Mammary epithelial cell (primary cell): ENCODE measurements at regions of chr5 and their contacts with region 1.

Region 1: DNA sequence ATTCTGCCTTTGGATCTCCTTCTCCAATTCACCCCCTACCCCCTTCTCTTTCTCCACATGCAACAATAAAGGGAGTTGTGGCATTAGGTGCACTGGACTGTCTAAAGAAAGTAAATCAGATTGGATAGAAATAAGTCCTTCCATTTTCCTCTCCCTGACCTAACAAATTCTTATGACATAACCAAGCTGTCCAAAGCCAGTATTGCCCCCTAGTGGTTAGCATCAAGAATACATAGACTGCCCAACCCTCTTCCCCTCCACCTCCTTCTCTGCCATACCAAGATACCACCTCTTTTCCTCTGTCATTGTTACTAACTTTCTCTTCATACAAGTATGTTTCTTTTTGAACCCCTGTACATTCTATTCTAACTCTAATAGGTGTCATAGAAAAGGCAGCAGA is 45.7 kb downstream of the PPARGC1B start:
- DNase-seq: peak; percentile 20
- H3K4me3 ChIP-seq: no peak overlapping the region
- H3K27ac ChIP-seq: no peak overlapping the region
- H3K4me1 ChIP-seq: peaks cover 40% of the 10 kb centered on the region
- H3K27me3 ChIP-seq: no peaks in the 10 kb centered on the region
- CTCF ChIP-seq: peak; percentile 48 to 51

Region 2: DNA sequence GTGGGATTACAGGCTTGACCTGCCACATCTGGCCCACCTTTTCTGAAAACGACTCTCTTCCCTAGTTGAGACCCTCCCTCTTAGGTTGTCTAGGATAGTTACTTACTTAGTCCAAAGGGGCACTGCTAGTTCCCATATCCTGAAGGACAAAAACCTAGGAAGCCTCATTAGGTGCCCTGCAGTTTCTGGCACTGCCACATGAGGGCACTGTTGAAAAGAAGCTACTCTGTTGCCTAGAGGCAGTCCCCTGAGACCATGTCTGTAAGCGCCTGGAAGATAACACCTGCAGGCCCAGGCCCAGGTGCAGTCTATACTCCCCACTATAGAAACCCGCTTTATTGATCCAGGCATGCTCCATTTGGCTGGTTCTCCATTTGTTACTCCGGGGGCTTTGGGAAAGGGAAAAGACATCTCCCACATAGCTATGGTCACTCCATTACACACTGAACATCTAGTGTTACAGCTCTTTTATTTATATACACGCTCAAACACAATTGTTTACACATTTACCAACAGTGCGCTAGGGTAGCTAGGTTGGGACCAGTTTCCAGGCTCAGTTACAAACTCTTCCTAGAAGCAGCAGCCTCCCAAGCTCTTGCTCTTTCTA is 119.1 kb before region 1 on chr5:
- CTCF ChIA-PET with region 1: interaction called, 3 read pairs
- dilution Hi-C with region 1: no loop called
- in situ Hi-C with region 1: no loop called
- intact Hi-C with region 1: loop called (anchors 2 kb)
- DNase-seq: peak; percentile 26
- H3K4me3 ChIP-seq: no peak overlapping the region
- H3K27ac ChIP-seq: no peak overlapping the region
- H3K4me1 ChIP-seq: no peaks in the 10 kb centered on the region
- H3K27me3 ChIP-seq: no peaks in the 10 kb centered on the region
- CTCF ChIP-seq: peak; percentile 93 to 96

Region 3: DNA sequence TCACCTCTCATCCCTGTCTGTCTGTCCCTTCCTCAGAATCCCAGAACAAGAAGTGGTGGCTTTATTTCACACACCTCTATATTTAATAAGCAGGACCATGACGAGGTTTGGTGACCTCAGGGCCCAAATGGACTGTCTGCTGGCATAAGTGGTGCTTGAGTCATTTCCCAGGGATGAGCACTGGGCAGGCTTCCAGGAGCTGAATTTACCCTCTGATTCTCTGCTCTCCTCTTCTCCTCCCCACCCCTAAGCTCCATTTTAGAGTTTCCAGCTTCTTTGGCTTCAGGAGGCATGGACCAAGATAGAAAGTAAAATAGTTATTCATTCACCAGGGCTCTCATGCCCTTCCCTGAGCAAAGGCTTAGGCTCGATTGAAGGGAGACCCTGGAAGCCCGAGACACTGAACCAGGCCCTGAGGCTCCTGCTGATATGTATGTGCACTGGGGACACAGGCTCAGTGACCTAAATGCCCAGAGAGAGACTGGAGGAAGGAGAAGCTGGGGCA is 23.4 kb after region 1 on chr5:
- CTCF ChIA-PET with region 1: no interaction called
- dilution Hi-C with region 1: no loop called
- in situ Hi-C with region 1: no loop called
- intact Hi-C with region 1: loop called (anchors 2 kb)
- DNase-seq: peak; percentile 73
- H3K4me3 ChIP-seq: no peak overlapping the region
- H3K27ac ChIP-seq: no peak overlapping the region
- H3K4me1 ChIP-seq: peaks cover 13% of the 10 kb centered on the region
- H3K27me3 ChIP-seq: no peaks in the 10 kb centered on the region
- CTCF ChIP-seq: no peak